Panc1 (cell line): ENCODE measurements at regions of chr11 and their contacts with region 1.

Region 1: GRCh38 chr11:58127342-58127741 is 2.0 kb upstream of the OR9I1 start:
- DNase-seq: no peak
- ATAC-seq: no peak
- H3K4me3 ChIP-seq: no peak overlapping the region
- H3K27ac ChIP-seq: no peak overlapping the region
- H3K4me1 ChIP-seq: no peaks in the 10 kb centered on the region
- H3K27me3 ChIP-seq: no peaks in the 10 kb centered on the region
- CTCF ChIP-seq: no peak

Region 2: DNA sequence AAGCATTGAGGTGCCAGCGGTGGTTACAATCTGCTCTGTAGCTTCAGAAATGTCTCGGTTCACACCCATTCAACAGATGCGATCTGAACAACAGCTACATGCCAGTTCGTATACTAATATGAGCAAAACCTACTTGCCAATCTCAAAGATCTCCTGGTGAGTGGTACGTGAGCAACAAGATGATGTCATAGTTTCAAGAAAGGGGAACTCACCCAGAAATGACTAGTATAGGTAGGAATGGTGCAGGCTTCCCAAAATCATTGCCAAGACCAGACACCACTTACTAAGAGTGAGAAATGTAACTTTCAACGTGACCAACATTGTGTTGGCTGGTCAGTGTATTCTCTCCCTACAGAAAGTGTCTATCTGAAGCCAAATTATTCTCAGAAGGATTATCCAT is 65.5 kb before region 1 on chr11:
- CTCF ChIA-PET with region 1: no interaction called
- POLR2A ChIA-PET with region 1: no interaction called
- in situ Hi-C with region 1: no loop called
- intact Hi-C with region 1: loop called (anchors 10 kb)
- DNase-seq: no peak
- ATAC-seq: no peak
- H3K4me3 ChIP-seq: no peak overlapping the region
- H3K27ac ChIP-seq: no peak overlapping the region
- H3K4me1 ChIP-seq: no peaks in the 10 kb centered on the region
- H3K27me3 ChIP-seq: no peaks in the 10 kb centered on the region
- CTCF ChIP-seq: no peak

Region 3: DNA sequence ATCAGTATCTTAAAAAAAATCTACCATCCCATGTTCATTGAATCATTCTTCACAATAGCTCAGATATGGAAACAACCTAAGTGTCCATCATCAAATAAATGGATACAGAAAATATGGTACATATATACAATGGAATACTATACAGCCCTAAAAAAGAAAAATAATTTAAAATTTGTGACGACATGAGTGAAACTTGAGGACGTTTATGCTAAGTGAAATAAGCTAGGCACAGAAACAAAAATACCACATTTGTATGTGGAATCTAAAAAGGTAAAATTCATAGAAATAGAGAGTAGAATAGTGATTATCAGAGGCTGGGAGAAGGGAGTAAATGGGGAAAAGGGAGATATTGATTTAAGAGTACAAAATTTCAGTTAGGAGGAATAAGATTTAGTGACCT is 40.8 kb before region 1 on chr11:
- CTCF ChIA-PET with region 1: no interaction called
- POLR2A ChIA-PET with region 1: no interaction called
- in situ Hi-C with region 1: no loop called
- intact Hi-C with region 1: no loop called
- DNase-seq: no peak
- ATAC-seq: no peak
- H3K4me3 ChIP-seq: no peak overlapping the region
- H3K27ac ChIP-seq: no peak overlapping the region
- H3K4me1 ChIP-seq: no peaks in the 10 kb centered on the region
- H3K27me3 ChIP-seq: no peaks in the 10 kb centered on the region
- CTCF ChIP-seq: no peak